Activated T-helper 1 cell treated with anti-CD3 and anti-CD28 coated beads, Interleukin-12 subunit alpha, Interleukin-12 subunit beta, Interleukin-2, Interleukin-4 antibody, amounts not matched to agents 30 ng/mL and 10 ng/mL and 1 ng/mL, durations not matched to agents 14 hours and 24 hours and 36 hours (primary cell): ENCODE measurements at regions of chr2 and their contacts with region 1.

Region 1: DNA sequence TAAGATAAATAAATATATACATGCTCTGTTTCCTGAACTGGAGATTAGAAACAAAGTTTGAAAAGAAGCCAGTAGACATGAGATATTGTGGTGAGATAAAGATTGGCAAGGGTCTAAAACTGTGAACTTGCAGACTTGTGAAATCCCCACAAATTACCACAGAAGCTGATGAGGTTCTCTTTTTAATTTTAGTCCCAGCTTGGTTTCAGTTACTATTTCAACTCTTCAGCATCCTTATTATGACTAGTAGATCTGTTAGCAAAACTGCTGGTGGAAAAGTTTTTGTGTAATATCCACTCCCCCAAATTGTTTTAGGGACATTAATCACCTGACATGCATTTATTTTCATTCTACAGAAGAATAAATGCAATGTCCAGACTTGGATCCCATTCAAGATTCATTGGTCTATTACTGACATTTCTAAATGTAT is 20.8 kb downstream of the RASGRP3 start:
- DNase-seq: no peak
- H3K4me3 Mint-ChIP-seq: peak overlapping the region; percentile 23
- H3K27ac Mint-ChIP-seq: peak overlapping the region; percentile 49
- H3K4me1 Mint-ChIP-seq: peaks cover 50% of the 10 kb centered on the region
- H3K27me3 Mint-ChIP-seq: peaks cover 2% of the 10 kb centered on the region

Region 2: GRCh38 chr2:33518926-33519325 is 21.7 kb after region 1 on chr2:
- intact Hi-C with region 1: loop called (anchors 2 kb)
- DNase-seq: no peak
- H3K4me3 Mint-ChIP-seq: no peak overlapping the region
- H3K27ac Mint-ChIP-seq: no peak overlapping the region
- H3K4me1 Mint-ChIP-seq: no peaks in the 10 kb centered on the region
- H3K27me3 Mint-ChIP-seq: no peaks in the 10 kb centered on the region

Region 3: DNA sequence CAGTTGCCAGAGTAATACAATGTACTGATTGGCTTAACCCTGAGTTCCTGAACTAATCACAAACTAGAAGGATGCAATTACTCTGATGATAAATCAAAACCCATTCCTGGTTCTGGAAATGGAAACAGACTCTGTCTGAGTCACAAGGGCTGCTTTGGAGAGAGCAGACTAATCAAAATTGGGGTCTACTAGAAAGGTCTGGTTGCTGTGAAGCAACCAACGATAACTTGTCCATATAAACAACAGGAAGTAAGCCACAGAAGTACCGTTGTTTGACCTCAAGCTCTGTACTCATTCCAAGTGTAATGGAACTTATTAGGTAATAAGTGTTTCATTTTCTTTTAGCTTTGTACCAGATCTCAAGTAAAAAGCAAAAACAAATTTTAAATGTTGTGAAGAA is 28.9 kb after region 1 on chr2:
- intact Hi-C with region 1: loop called (anchors 1 kb)
- DNase-seq: no peak
- H3K4me3 Mint-ChIP-seq: no peak overlapping the region
- H3K27ac Mint-ChIP-seq: peak overlapping the region; percentile 61
- H3K4me1 Mint-ChIP-seq: peaks cover 30% of the 10 kb centered on the region
- H3K27me3 Mint-ChIP-seq: no peaks in the 10 kb centered on the region